ENCODE measurements at regions of chr19 and their contacts with region 1.

Region 1: DNA sequence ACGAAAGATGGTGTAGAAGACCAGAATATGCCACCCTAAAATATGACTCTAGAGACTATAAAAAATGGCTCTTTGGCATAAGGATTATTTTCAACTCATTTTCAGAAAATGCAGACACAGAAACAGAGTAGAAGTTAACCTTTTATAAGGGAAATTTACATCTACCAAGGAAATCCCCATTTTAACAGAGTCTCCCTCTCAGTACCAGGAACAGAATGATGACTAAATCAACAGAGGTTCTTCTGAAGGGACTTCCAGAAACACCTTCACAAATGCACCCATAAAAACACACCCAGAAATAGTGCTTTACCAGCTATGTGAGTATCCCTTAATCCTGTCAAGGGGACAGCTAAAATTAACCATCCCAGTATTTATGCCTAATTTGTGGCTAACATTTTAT is 29.1 kb downstream of the PLPP2 start:
- DNase-seq: no peak
- H3K4me3 ChIP-seq: no peak overlapping the region
- H3K27me3 ChIP-seq: no peaks in the 10 kb centered on the region; the same call in 1 of the 2 replicates
- CTCF ChIP-seq: no peak

Region 2: GRCh38 chr19:246541-246940 is 15.6 kb before region 1 on chr19:
- CTCF ChIA-PET with region 1: no interaction called
- POLR2A ChIA-PET with region 1: no interaction called
- DNase-seq: no peak
- H3K4me3 ChIP-seq: no peak overlapping the region
- H3K27me3 ChIP-seq: no peaks in the 10 kb centered on the region
- CTCF ChIP-seq: no peak

Region 3: GRCh38 chr19:277581-278165 is 15.5 kb after region 1 on chr19:
- CTCF ChIA-PET with region 1: interaction called, 14 read pairs
- POLR2A ChIA-PET with region 1: no interaction called
- DNase-seq: no peak
- H3K4me3 ChIP-seq: no peak overlapping the region
- H3K27me3 ChIP-seq: no peaks in the 10 kb centered on the region
- CTCF ChIP-seq: no peak